Mucosa of descending colon (tissue), 3 donors: ENCODE measurements at regions of chr7 and their contacts with region 1.

Region 1: DNA sequence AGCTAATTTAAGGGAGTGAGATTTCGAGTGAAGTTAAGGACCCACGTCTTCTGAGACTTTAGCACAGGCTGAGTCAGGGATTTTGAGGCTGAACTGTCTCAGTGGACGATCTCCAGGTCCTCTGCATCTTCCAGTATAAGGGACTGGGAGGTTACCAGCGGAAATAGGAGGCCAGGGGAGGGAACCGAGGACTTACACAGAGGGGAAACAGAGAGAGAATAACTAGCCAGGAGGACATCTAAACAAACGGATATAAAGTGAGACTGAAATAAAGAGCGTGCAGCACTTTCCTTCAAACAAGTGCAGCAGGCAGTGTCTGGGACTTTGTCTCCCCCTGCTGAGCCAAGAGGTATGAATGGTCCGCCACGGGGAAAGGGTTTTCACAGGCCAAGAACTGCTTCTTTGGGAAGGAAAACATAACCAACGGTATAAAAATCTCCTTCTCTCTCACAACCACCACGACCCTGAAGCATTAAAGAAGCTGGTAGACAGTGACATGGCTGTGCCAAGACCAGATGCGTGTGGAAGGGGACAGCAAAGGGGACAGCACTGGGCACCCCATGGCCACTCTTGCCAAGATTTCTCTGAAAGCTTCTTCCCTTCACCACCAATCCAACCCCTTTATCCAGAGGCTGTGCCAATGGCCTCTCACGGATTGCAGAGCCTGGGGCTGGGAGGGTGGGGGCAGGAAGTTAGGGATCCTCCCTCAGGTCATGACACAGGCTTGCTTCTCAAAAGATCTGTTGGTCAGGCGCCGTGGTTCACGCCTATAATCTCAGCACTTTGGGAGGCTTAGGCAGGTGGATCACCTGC is 72.0 kb downstream of the SLC37A3 start:
- DNase-seq: peak in 2 of 3 donors; percentile 76 to 90
- ATAC-seq: peak; percentile 89
- H3K4me3 ChIP-seq: no peak overlapping the region
- H3K4me1 ChIP-seq: peaks cover 28% of the 10 kb centered on the region
- CTCF ChIP-seq: peak; percentile 42

Region 2: DNA sequence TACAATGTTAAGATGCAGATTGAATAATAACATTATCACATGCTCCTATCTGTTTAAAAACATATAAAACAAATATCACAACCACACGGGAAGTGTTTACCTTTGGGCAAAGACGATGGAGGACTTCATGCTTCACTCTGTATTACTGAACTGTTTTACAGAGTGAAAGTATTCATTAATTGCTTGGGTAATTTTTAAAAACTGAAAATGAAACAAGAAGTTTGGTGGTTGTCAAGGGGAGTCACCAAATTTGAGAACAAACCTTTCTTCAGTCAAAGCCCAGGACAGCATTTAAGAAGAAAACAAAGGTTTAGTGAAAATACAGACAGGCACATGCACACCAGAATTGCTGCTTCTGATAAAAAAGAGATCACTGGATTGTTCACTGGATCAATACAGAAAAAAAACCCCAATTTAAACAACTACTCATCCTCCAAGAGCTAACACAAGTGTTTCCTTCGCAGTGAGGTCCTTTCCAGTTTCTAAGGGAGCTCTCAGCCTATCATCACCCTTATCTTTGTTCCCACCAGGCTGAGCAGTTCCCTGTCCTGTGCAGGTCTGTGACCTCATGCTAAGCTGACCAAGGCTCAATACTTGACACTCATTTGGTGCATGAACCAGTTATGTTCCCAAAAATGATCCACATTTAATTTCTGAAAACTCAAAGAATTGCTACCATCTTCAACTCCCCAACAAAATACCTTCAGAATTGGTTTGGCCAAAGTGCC is 272.3 kb before region 1 on chr7:
- intact Hi-C with region 1: no loop called
- DNase-seq: no peak
- ATAC-seq: no peak
- H3K4me3 ChIP-seq: no peak overlapping the region
- H3K4me1 ChIP-seq: peaks cover 10% of the 10 kb centered on the region
- CTCF ChIP-seq: no peak

Region 3: DNA sequence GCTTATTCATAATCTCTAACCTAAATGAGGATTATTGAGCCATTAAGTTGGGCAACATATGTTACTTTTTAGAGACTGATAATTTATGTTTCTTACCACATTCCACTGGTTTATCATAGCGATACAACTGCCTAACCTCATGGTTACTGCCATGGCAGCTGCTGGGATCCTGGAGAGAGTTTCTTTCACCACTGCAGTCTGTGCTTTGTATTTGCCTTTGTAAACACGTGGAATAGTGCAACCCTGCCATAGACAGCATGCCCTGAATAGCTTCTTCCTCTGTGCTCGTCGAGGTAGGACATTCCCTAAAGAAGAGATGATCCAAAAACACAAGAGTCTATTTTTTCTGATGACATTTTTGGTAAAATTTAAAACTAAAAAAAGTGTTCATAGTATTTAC is 229.9 kb before region 1 on chr7:
- intact Hi-C with region 1: no loop called
- DNase-seq: no peak
- ATAC-seq: no peak
- H3K4me3 ChIP-seq: no peak overlapping the region
- H3K4me1 ChIP-seq: no peaks in the 10 kb centered on the region
- CTCF ChIP-seq: no peak

Region 4: DNA sequence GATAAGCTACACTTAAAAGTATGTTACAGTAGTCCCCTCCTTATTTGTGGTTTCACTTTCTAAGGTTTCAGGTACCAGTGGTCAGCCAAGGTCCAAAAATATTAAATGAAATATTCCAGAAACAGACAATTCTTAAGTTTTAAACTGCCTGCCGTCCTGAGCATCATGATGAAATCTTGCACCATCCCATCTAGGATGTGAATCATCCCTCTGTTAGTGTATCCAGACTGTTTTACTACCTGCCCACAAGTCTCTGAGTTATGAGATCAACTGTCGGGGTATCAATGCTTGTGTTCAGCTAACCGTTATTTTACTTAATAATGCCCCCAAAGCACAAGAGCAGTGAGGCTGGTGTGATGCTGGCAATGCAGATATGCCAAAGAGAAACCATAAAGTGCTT is 160.9 kb before region 1 on chr7:
- intact Hi-C with region 1: loop called in 1 of 2 experiments (anchors 10 kb)
- DNase-seq: no peak
- ATAC-seq: peak; percentile 65
- H3K4me3 ChIP-seq: no peak overlapping the region
- H3K4me1 ChIP-seq: peaks cover 19% of the 10 kb centered on the region
- CTCF ChIP-seq: no peak

Region 5: GRCh38 chr7:140439359-140439758 is 113.0 kb after region 1 on chr7:
- intact Hi-C with region 1: no loop called
- DNase-seq: no peak
- ATAC-seq: peak; percentile 79
- H3K4me3 ChIP-seq: no peak overlapping the region
- H3K4me1 ChIP-seq: peaks cover 10% of the 10 kb centered on the region
- CTCF ChIP-seq: no peak